Mammary epithelial cell (primary cell): ENCODE measurements at regions of chr7 and their contacts with region 1.

Region 1: GRCh38 chr7:141072548-141073172 is 1.2 kb upstream of the TMEM178B start:
- DNase-seq: peak; percentile 53
- H3K4me3 ChIP-seq: peak overlapping the region; percentile 28 to 46 (median 43)
- H3K27ac ChIP-seq: no peak overlapping the region
- H3K4me1 ChIP-seq: peaks cover 24% of the 10 kb centered on the region
- H3K27me3 ChIP-seq: peaks cover 44% of the 10 kb centered on the region
- CTCF ChIP-seq: no peak

Region 2: GRCh38 chr7:141220263-141220880 is 147.7 kb after region 1 on chr7:
- CTCF ChIA-PET with region 1: no interaction called
- dilution Hi-C with region 1: no loop called
- in situ Hi-C with region 1: no loop called
- intact Hi-C with region 1: loop called (anchors 5 kb)
- DNase-seq: no peak
- H3K4me3 ChIP-seq: no peak overlapping the region
- H3K27ac ChIP-seq: no peak overlapping the region
- H3K4me1 ChIP-seq: no peaks in the 10 kb centered on the region
- H3K27me3 ChIP-seq: no peaks in the 10 kb centered on the region
- CTCF ChIP-seq: peak; percentile 29 to 57

Region 3: DNA sequence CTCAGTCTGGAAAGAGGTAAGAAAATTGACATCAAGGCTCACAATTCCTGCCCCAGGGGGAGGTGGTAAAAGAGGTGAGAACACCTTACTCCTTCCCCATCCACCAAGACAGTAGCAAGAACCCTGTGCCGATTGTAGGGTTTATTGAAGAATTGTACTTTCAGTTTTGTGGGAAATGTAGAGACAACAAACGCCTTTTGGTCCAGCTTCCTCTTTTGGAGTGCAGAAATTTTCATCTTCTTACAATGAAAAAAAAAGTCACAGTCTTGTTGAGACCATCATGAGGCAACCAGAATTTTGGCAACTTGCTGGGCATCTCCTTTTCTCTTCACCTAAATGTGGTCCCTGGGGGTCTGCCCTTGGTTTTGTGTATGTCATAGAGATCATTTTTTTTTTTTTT is 218.9 kb after region 1 on chr7:
- CTCF ChIA-PET with region 1: no interaction called
- dilution Hi-C with region 1: no loop called
- in situ Hi-C with region 1: no loop called
- intact Hi-C with region 1: no loop called
- DNase-seq: no peak
- H3K4me3 ChIP-seq: no peak overlapping the region
- H3K27ac ChIP-seq: no peak overlapping the region
- H3K4me1 ChIP-seq: no peaks in the 10 kb centered on the region
- H3K27me3 ChIP-seq: peaks cover 4% of the 10 kb centered on the region
- CTCF ChIP-seq: no peak